Endothelial cell of umbilical vein (primary cell): ENCODE measurements at regions of chr5 and their contacts with region 1.

Region 1: GRCh38 chr5:60677844-60678664 is 21.9 kb downstream of the DEPDC1B start:
- DNase-seq: peak; percentile 70
- H3K4me3 ChIP-seq: no peak overlapping the region
- H3K27ac ChIP-seq: no peak overlapping the region
- H3K4me1 ChIP-seq: no peaks in the 10 kb centered on the region
- H3K27me3 ChIP-seq: no peaks in the 10 kb centered on the region
- CTCF ChIP-seq: peak; percentile 22
- POLR2A ChIP-seq: no peak

Region 2: DNA sequence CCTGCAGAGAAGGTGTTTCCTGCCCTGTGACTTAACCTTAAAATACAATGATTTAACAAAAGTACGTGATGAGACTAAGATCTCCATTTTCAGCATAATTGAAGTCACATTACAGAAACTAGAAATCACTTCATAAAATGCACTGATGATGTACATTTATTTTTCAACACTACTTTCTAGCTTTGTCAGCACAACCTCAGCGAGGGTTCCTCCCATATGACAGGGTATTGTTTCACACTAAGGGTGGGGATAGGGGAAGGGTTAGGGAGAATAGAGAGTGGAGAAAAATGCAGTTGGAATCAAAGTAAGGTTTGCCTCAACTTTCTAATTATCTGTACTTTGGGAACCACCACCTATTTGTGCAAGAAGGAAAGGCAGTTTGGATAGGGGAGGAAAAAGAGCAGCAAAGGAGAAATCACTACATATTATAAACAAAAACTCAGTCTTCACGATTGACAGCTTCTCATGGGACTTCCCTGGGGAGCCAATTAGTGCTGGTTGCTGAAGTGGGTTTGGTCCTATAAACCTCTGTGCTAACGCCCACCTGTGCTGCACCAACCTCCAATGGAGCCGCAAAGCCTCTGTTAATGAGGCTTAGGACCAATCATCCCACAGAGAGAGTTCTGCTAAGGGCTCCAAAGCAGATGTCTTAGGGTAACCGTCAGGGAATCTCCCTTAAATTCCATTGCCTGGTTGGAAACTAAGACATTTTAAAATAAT is 415.3 kb before region 1 on chr5:
- CTCF ChIA-PET with region 1: no interaction called
- POLR2A ChIA-PET with region 1: no interaction called
- dilution Hi-C with region 1: no loop called
- intact Hi-C with region 1: no loop called
- DNase-seq: no peak
- H3K4me3 ChIP-seq: no peak overlapping the region
- H3K27ac ChIP-seq: no peak overlapping the region
- H3K4me1 ChIP-seq: peaks cover 7% of the 10 kb centered on the region
- H3K27me3 ChIP-seq: peaks cover 0 to 3% of the 10 kb centered on the region in 2 experiments
- CTCF ChIP-seq: no peak
- POLR2A ChIP-seq: no peak

Region 3: DNA sequence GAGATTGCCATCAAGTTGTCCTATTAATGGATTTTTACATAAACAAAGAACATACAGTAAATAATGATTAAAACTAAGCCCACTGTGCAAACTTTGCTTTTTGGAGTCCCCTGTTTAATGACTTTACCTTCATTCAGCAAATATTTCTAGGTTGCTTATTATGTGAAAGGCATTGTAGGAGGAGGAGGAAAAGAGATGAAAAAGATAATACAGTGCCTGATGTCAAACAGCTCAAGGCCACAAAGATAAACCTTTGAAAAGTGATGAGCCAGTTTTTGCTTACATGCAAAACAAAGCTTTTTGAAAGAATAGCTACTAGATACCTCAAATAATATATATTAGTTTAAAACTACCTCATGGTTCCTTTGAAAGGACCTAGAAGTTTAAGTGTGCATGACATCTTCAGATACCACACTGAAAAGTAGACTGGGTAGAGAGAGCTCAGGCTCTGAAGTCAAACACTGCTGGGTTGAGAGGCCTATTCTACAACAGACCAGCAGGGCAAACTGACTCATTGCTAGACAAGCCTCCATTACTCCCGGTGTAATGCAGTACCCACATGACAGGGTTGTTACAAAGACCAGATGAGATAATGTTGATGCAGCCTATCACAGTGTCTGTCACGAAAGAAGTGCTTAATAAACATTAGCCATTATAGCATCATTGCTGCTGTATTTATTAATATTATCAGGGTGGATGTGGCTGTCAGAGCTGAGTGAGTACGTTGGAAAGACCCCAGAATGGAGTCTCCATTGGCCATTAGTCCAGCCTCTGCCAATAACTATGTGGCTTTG is 10.1 kb after region 1 on chr5:
- CTCF ChIA-PET with region 1: interaction called, 26 read pairs
- POLR2A ChIA-PET with region 1: no interaction called
- dilution Hi-C with region 1: no loop called
- intact Hi-C with region 1: no loop called
- DNase-seq: peak; percentile 32
- H3K4me3 ChIP-seq: no peak overlapping the region
- H3K27ac ChIP-seq: no peak overlapping the region
- H3K4me1 ChIP-seq: no peaks in the 10 kb centered on the region
- H3K27me3 ChIP-seq: no peaks in the 10 kb centered on the region
- CTCF ChIP-seq: peak; percentile 28 to 57
- POLR2A ChIP-seq: no peak

Region 4: GRCh38 chr5:60699530-60700382 is 21.7 kb after region 1 on chr5 and contains the start of gene DEPDC1B:
- CTCF ChIA-PET with region 1: interaction called, 59 read pairs
- POLR2A ChIA-PET with region 1: no interaction called
- dilution Hi-C with region 1: no loop called
- intact Hi-C with region 1: loop called (anchors 2 kb)
- DNase-seq: peak; percentile 92
- H3K4me3 ChIP-seq: peak within 1 kb of the TSS; percentile 53 to 87 (median 70)
- H3K27ac ChIP-seq: peak within 1 kb of the TSS; percentile 54
- H3K4me1 ChIP-seq: peaks cover 15% of the 10 kb centered on the region
- H3K27me3 ChIP-seq: peaks cover 3 to 5% of the 10 kb centered on the region in 2 experiments
- CTCF ChIP-seq: peak; percentile 42 to 60
- POLR2A ChIP-seq: peak; percentile 64
- total RNA-seq, gene DEPDC1B: 14.2 and 18.7 TPM in 2 replicates

Region 5: GRCh38 chr5:60763061-60763460 is 85.0 kb after region 1 on chr5:
- CTCF ChIA-PET with region 1: no interaction called
- POLR2A ChIA-PET with region 1: no interaction called
- dilution Hi-C with region 1: no loop called
- intact Hi-C with region 1: no loop called
- DNase-seq: no peak
- H3K4me3 ChIP-seq: no peak overlapping the region
- H3K27ac ChIP-seq: no peak overlapping the region
- H3K4me1 ChIP-seq: no peaks in the 10 kb centered on the region
- H3K27me3 ChIP-seq: peaks cover 0 to 5% of the 10 kb centered on the region in 2 experiments
- CTCF ChIP-seq: no peak
- POLR2A ChIP-seq: no peak

Region 6: GRCh38 chr5:60883229-60883628 is 205.2 kb after region 1 on chr5:
- CTCF ChIA-PET with region 1: no interaction called
- POLR2A ChIA-PET with region 1: no interaction called
- dilution Hi-C with region 1: no loop called
- intact Hi-C with region 1: loop called (anchors 5 kb)
- DNase-seq: no peak
- H3K4me3 ChIP-seq: no peak overlapping the region
- H3K27ac ChIP-seq: no peak overlapping the region
- H3K4me1 ChIP-seq: no peaks in the 10 kb centered on the region
- H3K27me3 ChIP-seq: no peaks in the 10 kb centered on the region
- CTCF ChIP-seq: peak in 1 of 2 donors; percentile 24
- POLR2A ChIP-seq: no peak

Region 7: GRCh38 chr5:60929024-60929423 is 251.0 kb after region 1 on chr5:
- CTCF ChIA-PET with region 1: interaction called, 16 read pairs
- POLR2A ChIA-PET with region 1: no interaction called
- dilution Hi-C with region 1: no loop called
- intact Hi-C with region 1: loop called (anchors 1 kb)
- DNase-seq: peak; percentile 13
- H3K4me3 ChIP-seq: no peak overlapping the region
- H3K27ac ChIP-seq: no peak overlapping the region
- H3K4me1 ChIP-seq: no peaks in the 10 kb centered on the region
- H3K27me3 ChIP-seq: no peaks in the 10 kb centered on the region
- CTCF ChIP-seq: no peak
- POLR2A ChIP-seq: no peak

Region 8: GRCh38 chr5:60944904-60945812 is 267.1 kb after region 1 on chr5 and contains the starts of genes ERCC8 and NDUFAF2:
- CTCF ChIA-PET with region 1: no interaction called
- POLR2A ChIA-PET with region 1: no interaction called
- dilution Hi-C with region 1: no loop called
- intact Hi-C with region 1: loop called (anchors 5 kb)
- DNase-seq: peak; percentile 95
- H3K4me3 ChIP-seq: peak within 1 kb of the TSS; percentile 71 to 94 (median 78)
- H3K27ac ChIP-seq: peak within 1 kb of the TSS; percentile 21
- H3K4me1 ChIP-seq: peaks cover 21% of the 10 kb centered on the region
- H3K27me3 ChIP-seq: no peaks in the 10 kb centered on the region
- CTCF ChIP-seq: no peak
- POLR2A ChIP-seq: peak; percentile 63
- total RNA-seq, gene ERCC8: 10.4 and 12.8 TPM in 2 replicates
- total RNA-seq, gene NDUFAF2: 39.9 and 42.4 TPM in 2 replicates

Region 9: GRCh38 chr5:61933787-61934626 is 1256.0 kb after region 1 on chr5:
- CTCF ChIA-PET with region 1: interaction called, 13 read pairs
- POLR2A ChIA-PET with region 1: no interaction called
- dilution Hi-C with region 1: no loop called
- intact Hi-C with region 1: loop called (anchors 2 kb)
- DNase-seq: peak; percentile 55
- H3K4me3 ChIP-seq: no peak overlapping the region
- H3K27ac ChIP-seq: no peak overlapping the region
- H3K4me1 ChIP-seq: no peaks in the 10 kb centered on the region
- H3K27me3 ChIP-seq: no peaks in the 10 kb centered on the region
- CTCF ChIP-seq: peak; percentile 29 to 52
- POLR2A ChIP-seq: no peak